ENCODE measurements at regions of chr3 and their contacts with region 1.

Region 1: GRCh38 chr3:160941885-160942494 is 163.2 kb downstream of the B3GALNT1 start:
- DNase-seq: no peak
- H3K4me3 ChIP-seq: no peak overlapping the region
- CTCF ChIP-seq: peak; percentile 77

Region 2: GRCh38 chr3:160686955-160687535 is 254.9 kb before region 1 on chr3:
- CTCF ChIA-PET with region 1: interaction called, 58 read pairs
- POLR2A ChIA-PET with region 1: no interaction called
- DNase-seq: no peak
- H3K4me3 ChIP-seq: no peak overlapping the region
- CTCF ChIP-seq: peak; percentile 18

Region 3: GRCh38 chr3:160707187-160707794 is 234.7 kb before region 1 on chr3:
- CTCF ChIA-PET with region 1: interaction called, 31 read pairs
- POLR2A ChIA-PET with region 1: no interaction called
- DNase-seq: no peak
- H3K4me3 ChIP-seq: no peak overlapping the region
- CTCF ChIP-seq: peak; percentile 48

Region 4: DNA sequence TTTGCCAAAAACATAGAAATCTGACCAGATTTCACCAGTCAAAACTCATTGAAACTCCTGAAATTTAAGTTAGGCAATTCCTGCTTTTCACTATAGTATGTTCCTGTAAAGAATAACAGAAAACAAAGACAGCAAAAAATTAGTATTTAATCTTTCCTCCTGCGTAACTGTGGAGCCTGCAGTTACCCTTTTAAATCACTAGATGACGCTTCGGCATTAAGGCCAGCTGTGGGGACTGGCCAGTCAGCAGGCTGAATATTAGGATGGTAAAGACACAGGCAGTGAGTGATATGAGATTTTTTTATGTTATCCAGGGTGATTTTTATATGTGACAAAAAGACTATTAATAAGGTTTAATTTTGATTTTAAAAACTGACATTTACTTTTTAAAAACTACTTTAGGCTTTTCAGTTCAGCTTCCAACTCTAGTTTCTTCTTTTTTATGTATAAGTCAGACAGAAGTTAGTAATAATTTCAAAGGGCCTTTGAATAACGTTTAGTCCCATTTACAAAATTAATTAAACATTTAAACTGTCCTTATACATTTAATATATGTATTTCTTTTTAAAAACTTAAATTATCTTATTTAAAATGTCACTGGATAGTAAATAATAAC is 20.9 kb before region 1 on chr3:
- CTCF ChIA-PET with region 1: interaction called, 48 read pairs
- POLR2A ChIA-PET with region 1: no interaction called
- DNase-seq: no peak
- H3K4me3 ChIP-seq: no peak overlapping the region
- CTCF ChIP-seq: peak; percentile 73

Region 5: DNA sequence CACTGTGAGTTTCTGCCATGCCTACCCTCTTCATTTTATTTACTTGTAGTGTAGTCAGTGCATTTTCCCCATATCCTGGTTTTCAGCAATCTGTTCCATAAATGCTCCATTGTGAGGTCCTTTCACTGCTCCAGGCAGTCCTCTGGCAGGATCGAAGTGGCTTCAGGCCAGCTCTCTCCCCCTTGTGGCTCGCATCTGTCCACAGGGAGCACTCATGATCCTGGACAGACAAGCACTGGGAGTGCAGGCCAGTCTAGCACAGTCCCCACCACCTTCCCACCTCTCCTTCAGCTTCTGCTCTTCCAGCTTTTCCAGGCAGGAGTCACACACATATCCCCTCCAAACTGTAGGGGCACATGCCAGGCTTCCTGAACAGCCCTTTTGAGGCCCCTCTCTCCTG is 12.4 kb before region 1 on chr3:
- CTCF ChIA-PET with region 1: interaction called, 48 read pairs
- POLR2A ChIA-PET with region 1: no interaction called
- DNase-seq: no peak
- H3K4me3 ChIP-seq: no peak overlapping the region
- CTCF ChIP-seq: peak; percentile 2

Region 6: GRCh38 chr3:161187046-161187445 is 245.1 kb after region 1 on chr3:
- CTCF ChIA-PET with region 1: no interaction called
- POLR2A ChIA-PET with region 1: no interaction called
- DNase-seq: no peak
- H3K4me3 ChIP-seq: no peak overlapping the region
- CTCF ChIP-seq: no peak

Measured in AG04449 (cell line).